AG04449 (cell line): ENCODE measurements at regions of chr13 and their contacts with region 1.

Region 1: DNA sequence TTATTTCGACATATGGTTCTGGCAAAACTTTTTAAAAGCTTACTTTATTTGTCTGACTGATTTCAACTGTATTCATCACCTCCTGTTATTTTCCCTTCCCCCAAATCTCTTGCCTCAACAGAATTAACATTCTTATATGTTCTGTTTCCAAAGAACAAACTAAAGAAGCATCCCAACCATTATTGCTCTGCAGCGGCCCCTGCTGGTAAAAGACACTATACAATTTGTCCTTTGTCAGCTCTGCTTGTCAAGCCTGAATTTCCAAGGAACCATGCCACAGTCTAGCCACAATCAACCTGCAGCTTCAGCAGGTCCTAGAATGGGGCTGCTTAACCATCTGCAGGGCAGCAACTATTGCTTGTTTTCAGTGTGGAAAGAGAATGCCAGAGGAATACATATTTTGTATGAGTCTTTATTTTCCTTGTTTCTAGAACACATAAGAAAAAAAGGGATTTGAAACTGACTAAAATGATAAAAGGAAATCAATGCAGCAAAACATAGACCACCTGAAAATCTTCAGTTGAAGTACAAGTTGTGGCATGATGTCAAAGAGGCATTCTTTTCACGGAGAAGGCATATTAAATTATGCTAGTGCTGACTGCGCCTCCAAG is 845.3 kb downstream of the DIAPH3 start:
- DNase-seq: no peak
- H3K4me3 ChIP-seq: no peak overlapping the region
- CTCF ChIP-seq: peak; percentile 56

Region 2: GRCh38 chr13:57624565-57625435 is 1693.6 kb before region 1 on chr13:
- CTCF ChIA-PET with region 1: interaction called, 17 read pairs
- POLR2A ChIA-PET with region 1: no interaction called
- DNase-seq: no peak
- H3K4me3 ChIP-seq: no peak overlapping the region
- CTCF ChIP-seq: peak; percentile 70

Region 3: GRCh38 chr13:59088716-59089115 is 229.7 kb before region 1 on chr13:
- CTCF ChIA-PET with region 1: no interaction called
- POLR2A ChIA-PET with region 1: no interaction called
- DNase-seq: no peak
- H3K4me3 ChIP-seq: no peak overlapping the region
- CTCF ChIP-seq: no peak

Region 4: DNA sequence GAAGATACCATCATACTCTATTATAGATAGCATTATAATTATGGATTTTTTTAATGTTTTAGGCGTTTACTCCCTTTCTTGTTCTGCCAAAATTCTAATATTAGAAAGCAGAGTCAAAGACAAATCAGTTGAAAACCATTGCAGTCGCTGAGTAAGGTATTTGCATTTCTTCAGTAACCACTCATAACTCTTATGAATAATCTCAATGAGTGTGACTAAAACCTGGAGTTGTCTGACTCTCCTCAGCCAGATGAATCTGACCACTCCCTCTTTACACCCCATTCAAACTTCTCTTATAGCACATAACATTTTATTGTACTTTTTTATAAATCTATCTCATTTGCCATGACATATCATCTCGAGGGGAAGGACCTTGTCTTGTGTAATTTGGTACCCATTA is 161.2 kb before region 1 on chr13:
- CTCF ChIA-PET with region 1: no interaction called
- POLR2A ChIA-PET with region 1: no interaction called
- DNase-seq: no peak
- H3K4me3 ChIP-seq: no peak overlapping the region
- CTCF ChIP-seq: no peak

Region 5: DNA sequence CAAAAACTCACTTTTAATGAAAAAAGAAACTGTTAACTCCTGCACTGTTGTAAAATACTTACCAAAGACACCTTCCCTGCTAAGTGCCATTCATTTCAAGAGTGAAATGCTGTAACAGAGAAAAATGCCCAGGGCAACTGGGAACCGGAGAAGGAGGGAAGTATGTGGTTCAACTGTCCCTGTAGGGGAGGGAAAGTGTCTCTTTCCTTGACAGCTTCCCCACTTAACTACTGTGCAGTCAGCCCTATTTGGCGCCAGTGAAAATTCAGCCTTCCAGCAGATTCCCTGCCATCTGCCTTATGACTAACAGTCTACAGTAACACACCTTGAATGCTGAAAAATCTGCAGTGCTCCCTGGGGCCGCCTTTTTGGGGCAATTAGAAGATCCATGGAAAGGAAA is 56.3 kb after region 1 on chr13:
- CTCF ChIA-PET with region 1: no interaction called
- POLR2A ChIA-PET with region 1: no interaction called
- DNase-seq: no peak
- H3K4me3 ChIP-seq: no peak overlapping the region
- CTCF ChIP-seq: no peak